Naive thymus-derived CD4-positive, alpha-beta T cell (primary cell): ENCODE measurements at regions of chr7 and their contacts with region 1.

Region 1: GRCh38 chr7:65872776-65873581 is at the start of gene VKORC1L1:
- DNase-seq: peak; percentile 87 to 97 (median 93)
- ATAC-seq: peak; percentile 94
- H3K4me3 ChIP-seq: peak within 1 kb of the TSS; percentile 47
- H3K4me3 Mint-ChIP-seq: peak within 1 kb of the TSS; percentile 81 to 92 (median 86)
- H3K27ac ChIP-seq: peak within 1 kb of the TSS; percentile 67
- H3K27ac Mint-ChIP-seq: peak within 1 kb of the TSS; percentile 43 to 90 (median 82)
- H3K4me1 ChIP-seq: no peaks in the 10 kb centered on the region
- H3K4me1 Mint-ChIP-seq: peaks cover 0 to 11% (median 6%) of the 10 kb centered on the region in 7 donors
- H3K27me3 ChIP-seq: no peaks in the 10 kb centered on the region
- H3K27me3 Mint-ChIP-seq: no peaks in the 10 kb centered on the region
- total RNA-seq, gene VKORC1L1: 3.4 to 15.8 (median 9.4) TPM

Region 2: DNA sequence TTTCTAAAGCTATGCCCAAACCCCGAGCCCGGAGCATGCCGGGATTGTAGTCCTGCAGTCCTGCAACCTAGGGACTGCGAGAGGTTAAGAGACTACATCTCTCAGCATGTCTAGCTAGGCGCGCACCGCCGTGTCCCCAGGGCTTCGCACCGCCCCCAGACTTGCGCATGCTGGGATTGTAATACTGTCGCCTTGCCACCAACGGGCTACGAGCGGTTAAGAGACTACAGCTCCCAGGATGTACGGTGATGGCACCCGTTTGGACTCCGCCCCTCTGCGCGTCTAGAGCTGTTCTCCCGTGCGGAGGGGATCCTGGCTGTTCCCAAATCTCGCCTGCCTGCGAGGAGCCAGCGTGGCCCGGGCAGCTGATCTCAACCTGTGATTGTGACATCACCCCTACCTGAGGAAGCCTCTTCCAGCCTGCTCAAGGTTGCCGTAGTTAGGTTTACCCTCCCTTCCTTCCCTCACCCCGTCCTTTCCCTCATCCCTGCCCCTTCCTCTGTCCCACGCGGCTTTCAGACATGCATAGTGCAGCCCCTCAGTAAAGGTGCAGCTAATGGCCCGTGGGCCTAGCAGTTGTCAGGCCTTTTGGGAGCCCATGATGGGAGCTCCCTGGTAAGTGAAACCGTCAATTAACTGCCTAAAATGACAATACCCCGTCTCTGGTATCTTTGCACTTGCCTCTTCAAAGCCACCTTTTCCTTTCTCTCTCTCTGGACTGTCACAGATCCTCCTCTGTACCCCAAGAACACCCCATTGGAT is 1565.5 kb before region 1 on chr7:
- CTCF ChIA-PET with region 1: no interaction called
- POLR2A ChIA-PET with region 1: no interaction called
- intact Hi-C with region 1: loop called (anchors 2 kb)
- DNase-seq: peak; percentile 76 to 95 (median 93)
- ATAC-seq: peak; percentile 99
- H3K4me3 ChIP-seq: peak overlapping the region; percentile 95
- H3K4me3 Mint-ChIP-seq: peak overlapping the region; percentile 90 to 100 (median 96)
- H3K27ac ChIP-seq: peak overlapping the region; percentile 83
- H3K27ac Mint-ChIP-seq: peak overlapping the region; percentile 94 to 99 (median 97)
- H3K4me1 ChIP-seq: peaks cover 0 to 13% of the 10 kb centered on the region in 2 donors
- H3K4me1 Mint-ChIP-seq: peaks cover 13 to 30% (median 19%) of the 10 kb centered on the region in 7 donors
- H3K27me3 ChIP-seq: no peaks in the 10 kb centered on the region
- H3K27me3 Mint-ChIP-seq: no peaks in the 10 kb centered on the region

Region 3: GRCh38 chr7:65037740-65038678 is 835.0 kb before region 1 on chr7:
- CTCF ChIA-PET with region 1: no interaction called
- POLR2A ChIA-PET with region 1: no interaction called
- intact Hi-C with region 1: loop called in 1 of 2 experiments (anchors 10 kb)
- DNase-seq: peak; percentile 85 to 92 (median 88)
- ATAC-seq: peak; percentile 95
- H3K4me3 ChIP-seq: no peak overlapping the region
- H3K4me3 Mint-ChIP-seq: peak overlapping the region; percentile 77 to 87 (median 82)
- H3K27ac ChIP-seq: peak overlapping the region; percentile 80
- H3K27ac Mint-ChIP-seq: peak overlapping the region; percentile 10 to 91 (median 83)
- H3K4me1 ChIP-seq: peaks cover 0 to 8% of the 10 kb centered on the region in 2 donors
- H3K4me1 Mint-ChIP-seq: peaks cover 7 to 18% (median 15%) of the 10 kb centered on the region in 7 donors
- H3K27me3 ChIP-seq: no peaks in the 10 kb centered on the region
- H3K27me3 Mint-ChIP-seq: no peaks in the 10 kb centered on the region

Region 4: GRCh38 chr7:65981965-65982792 is 109.2 kb after region 1 on chr7 and contains the start of gene GUSB:
- CTCF ChIA-PET with region 1: no interaction called
- POLR2A ChIA-PET with region 1: interaction called, 3 read pairs
- intact Hi-C with region 1: loop called (anchors 1 kb)
- DNase-seq: peak; percentile 80 to 91 (median 86)
- ATAC-seq: peak; percentile 87
- H3K4me3 ChIP-seq: peak within 1 kb of the TSS; percentile 88
- H3K4me3 Mint-ChIP-seq: peak within 1 kb of the TSS; percentile 76 to 91 (median 80)
- H3K27ac ChIP-seq: peak within 1 kb of the TSS; percentile 78
- H3K27ac Mint-ChIP-seq: peak within 1 kb of the TSS; percentile 36 to 91 (median 64)
- H3K4me1 ChIP-seq: peaks cover 15 to 19% of the 10 kb centered on the region in 2 donors
- H3K4me1 Mint-ChIP-seq: peaks cover 0 to 21% (median 10%) of the 10 kb centered on the region in 7 donors
- H3K27me3 ChIP-seq: no peaks in the 10 kb centered on the region
- H3K27me3 Mint-ChIP-seq: no peaks in the 10 kb centered on the region
- total RNA-seq, gene GUSB: 41.8 to 62.5 (median 53.3) TPM

Region 5: DNA sequence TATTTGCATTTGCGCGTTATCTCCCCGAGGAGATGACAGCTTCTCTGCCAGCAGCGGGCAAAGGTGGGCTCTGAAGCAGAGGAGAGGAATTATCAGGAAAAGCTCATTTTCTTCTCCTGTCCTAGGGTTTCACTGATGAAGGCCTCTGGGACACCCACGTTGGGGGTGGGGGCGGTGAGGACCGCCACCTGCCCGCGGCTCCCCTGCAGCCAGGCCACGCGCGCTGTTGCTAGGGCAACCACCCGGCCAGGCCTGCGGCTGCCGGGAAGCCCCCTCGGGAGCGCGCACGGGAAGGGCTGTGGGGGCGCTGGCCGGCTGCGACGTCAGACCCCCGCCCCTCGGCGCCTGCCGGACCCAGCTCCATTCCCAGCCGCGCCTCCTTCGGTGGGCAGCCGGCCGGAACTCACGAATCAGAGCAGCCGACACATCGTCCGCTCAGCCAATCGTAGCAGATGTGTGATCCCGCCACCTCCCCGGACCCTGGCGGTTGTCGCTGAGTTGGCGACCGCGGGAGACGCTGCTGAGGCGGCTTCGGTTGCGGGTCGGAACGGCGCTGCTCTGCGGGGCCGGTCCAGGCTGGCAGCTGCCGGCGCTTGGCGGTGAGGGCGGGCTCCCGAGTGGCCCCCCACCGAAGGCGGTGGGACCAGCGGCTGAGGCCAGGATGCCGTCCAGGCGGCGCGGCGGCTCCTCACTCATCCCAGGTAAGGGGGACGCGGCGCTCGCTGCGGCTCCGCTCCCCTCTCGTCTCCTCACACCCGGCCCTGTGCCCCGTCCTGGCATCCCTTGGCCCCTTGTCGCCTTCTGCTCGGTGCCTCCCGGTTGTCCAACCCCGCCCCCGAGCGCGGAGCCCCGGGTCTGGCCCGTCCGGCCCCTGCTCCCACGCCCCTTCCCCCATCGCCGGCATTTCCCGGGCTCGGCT is 332.1 kb after region 1 on chr7 and contains the start of gene TPST1:
- CTCF ChIA-PET with region 1: no interaction called
- POLR2A ChIA-PET with region 1: no interaction called
- intact Hi-C with region 1: loop called in 1 of 2 experiments (anchors 5 kb)
- DNase-seq: peak; percentile 69 to 83 (median 78)
- ATAC-seq: peak; percentile 94
- H3K4me3 ChIP-seq: peak within 1 kb of the TSS; percentile 49
- H3K4me3 Mint-ChIP-seq: peak within 1 kb of the TSS; percentile 90 to 98 (median 92)
- H3K27ac ChIP-seq: peak within 1 kb of the TSS; percentile 60
- H3K27ac Mint-ChIP-seq: peak within 1 kb of the TSS in 8 of 9 donors; percentile 75 to 91 (median 83)
- H3K4me1 ChIP-seq: peaks cover 0 to 30% of the 10 kb centered on the region in 2 donors
- H3K4me1 Mint-ChIP-seq: peaks cover 26 to 57% (median 46%) of the 10 kb centered on the region in 7 donors
- H3K27me3 ChIP-seq: no peaks in the 10 kb centered on the region
- H3K27me3 Mint-ChIP-seq: peaks cover 0 to 48% (median 6%) of the 10 kb centered on the region in 5 donors
- total RNA-seq, gene TPST1: 0.70 to 5.0 (median 2.7) TPM

Region 6: GRCh38 chr7:66844552-66845378 is 971.8 kb after region 1 on chr7:
- CTCF ChIA-PET with region 1: no interaction called
- POLR2A ChIA-PET with region 1: no interaction called
- intact Hi-C with region 1: loop called in 1 of 2 experiments (anchors 2 kb)
- DNase-seq: peak; percentile 96 to 100 (median 100)
- ATAC-seq: peak; percentile 95
- H3K4me3 ChIP-seq: peak overlapping the region; percentile 99
- H3K4me3 Mint-ChIP-seq: peak overlapping the region; percentile 88 to 100 (median 96)
- H3K27ac ChIP-seq: peak overlapping the region; percentile 90
- H3K27ac Mint-ChIP-seq: peak overlapping the region; percentile 98 to 100 (median 100)
- H3K4me1 ChIP-seq: peaks cover 5 to 11% of the 10 kb centered on the region in 2 donors
- H3K4me1 Mint-ChIP-seq: peaks cover 10 to 29% (median 26%) of the 10 kb centered on the region in 7 donors
- H3K27me3 ChIP-seq: no peaks in the 10 kb centered on the region
- H3K27me3 Mint-ChIP-seq: peaks cover 0 to 3% (median 0%) of the 10 kb centered on the region in 5 donors